Right ventricle myocardium superior (tissue), 1 donor: ENCODE measurements at regions of chr17 and their contacts with region 1.

Region 1: DNA sequence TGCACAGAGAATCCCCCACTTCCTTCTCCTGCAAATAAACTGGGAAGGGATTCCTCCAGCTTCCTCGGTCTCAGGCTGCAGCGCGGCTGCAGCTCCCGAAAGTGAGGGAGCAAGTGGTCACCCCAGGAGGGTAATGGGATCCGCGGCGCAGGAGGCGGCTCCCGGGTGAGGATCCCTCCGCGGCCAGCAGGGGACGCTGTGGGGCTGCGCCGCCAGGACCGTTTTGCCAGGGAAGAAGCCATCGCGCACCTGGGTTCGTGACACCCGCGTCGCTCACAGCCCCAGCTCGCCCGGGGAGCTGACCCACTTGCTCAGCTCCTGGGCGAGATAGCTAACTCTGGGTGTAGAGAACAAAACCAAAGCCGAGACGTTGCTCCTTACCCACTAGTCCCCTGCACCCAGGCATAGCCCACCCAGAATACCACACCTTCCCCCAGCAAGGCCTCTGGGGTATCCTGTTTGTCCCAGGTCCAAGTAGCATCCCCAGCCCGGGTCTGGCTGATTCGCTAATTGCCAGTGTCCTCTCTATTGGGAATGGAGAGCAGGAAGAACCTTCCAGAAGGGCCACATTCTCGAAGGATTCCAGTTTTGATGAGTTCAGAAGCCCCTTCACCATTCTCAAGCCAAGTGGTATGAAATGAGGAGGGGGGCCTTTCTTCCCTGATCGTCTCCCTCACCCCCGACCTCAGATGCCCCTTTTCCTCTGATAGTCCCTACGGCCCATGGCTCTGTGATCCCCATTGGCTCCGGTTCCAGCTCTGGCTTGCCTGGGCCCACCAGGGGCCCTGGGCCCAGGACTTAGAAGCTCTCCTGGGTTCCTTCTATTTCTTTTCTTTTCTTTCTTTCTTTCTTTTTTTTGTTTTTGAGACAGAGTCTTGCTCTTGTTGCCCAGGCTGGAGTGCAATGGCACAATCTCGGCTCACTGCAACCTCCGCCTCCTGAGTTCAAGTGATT is 14.1 kb downstream of the CYGB start:
- DNase-seq: peak; percentile 85
- ATAC-seq: peak; percentile 74

Region 2: GRCh38 chr17:76543826-76544545 is 20.6 kb after region 1 on chr17:
- intact Hi-C with region 1: loop called (anchors 2 kb)
- DNase-seq: no peak
- ATAC-seq: peak; percentile 14

Region 3: GRCh38 chr17:76585818-76586593 is 62.6 kb after region 1 on chr17 and contains the start of gene ST6GALNAC2:
- intact Hi-C with region 1: loop called (anchors 10 kb)
- DNase-seq: peak; percentile 79
- ATAC-seq: peak; percentile 93
- total RNA-seq, gene ST6GALNAC2: 6.1 TPM

Region 4: GRCh38 chr17:76623271-76624146 is 100.1 kb after region 1 on chr17:
- intact Hi-C with region 1: loop called (anchors 5 kb)
- DNase-seq: peak; percentile 85
- ATAC-seq: peak; percentile 97